Breast epithelium (tissue), 4 donors: ENCODE measurements at regions of chr5 and their contacts with region 1.

Region 1: GRCh38 chr5:55742778-55743177 is 4.9 kb downstream of the DDX4 start:
- DNase-seq: no peak
- H3K4me3 ChIP-seq: no peak overlapping the region
- H3K27ac ChIP-seq: no peak overlapping the region
- H3K4me1 ChIP-seq: no peaks in the 10 kb centered on the region
- H3K27me3 ChIP-seq: no peaks in the 10 kb centered on the region
- CTCF ChIP-seq: no peak
- POLR2A ChIP-seq: no peak

Region 2: GRCh38 chr5:55037046-55037771 is 705.6 kb before region 1 on chr5:
- intact Hi-C with region 1: no loop called
- DNase-seq: no peak
- H3K4me3 ChIP-seq: no peak overlapping the region
- H3K27ac ChIP-seq: no peak overlapping the region
- H3K4me1 ChIP-seq: no peaks in the 10 kb centered on the region
- H3K27me3 ChIP-seq: no peaks in the 10 kb centered on the region
- CTCF ChIP-seq: no peak
- POLR2A ChIP-seq: no peak

Region 3: GRCh38 chr5:55564721-55565120 is 178.1 kb before region 1 on chr5:
- intact Hi-C with region 1: no loop called
- DNase-seq: no peak
- H3K4me3 ChIP-seq: no peak overlapping the region
- H3K27ac ChIP-seq: no peak overlapping the region
- H3K4me1 ChIP-seq: no peaks in the 10 kb centered on the region
- H3K27me3 ChIP-seq: no peaks in the 10 kb centered on the region
- CTCF ChIP-seq: no peak
- POLR2A ChIP-seq: no peak

Region 4: DNA sequence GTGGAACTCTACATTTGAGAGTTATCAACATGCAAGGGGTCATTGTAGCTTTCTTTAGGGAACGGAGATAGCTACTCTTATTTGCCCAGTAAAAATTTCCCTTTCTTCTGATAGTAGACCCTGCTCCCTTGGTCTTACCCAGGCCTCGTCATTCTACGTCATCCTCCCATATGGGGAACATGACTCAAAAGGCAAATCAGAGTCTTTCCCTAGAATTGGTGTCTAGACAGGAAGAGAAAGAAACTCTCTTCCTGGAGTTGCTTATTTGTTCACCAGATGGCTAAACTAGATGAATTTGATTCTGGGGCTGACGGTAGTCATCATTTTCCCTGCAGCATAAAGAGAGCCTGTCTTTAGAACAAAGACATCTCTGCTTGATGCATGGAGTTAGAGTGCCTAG is 18.5 kb before region 1 on chr5:
- intact Hi-C with region 1: no loop called
- DNase-seq: no peak
- H3K4me3 ChIP-seq: no peak overlapping the region
- H3K27ac ChIP-seq: no peak overlapping the region
- H3K4me1 ChIP-seq: no peaks in the 10 kb centered on the region
- H3K27me3 ChIP-seq: no peaks in the 10 kb centered on the region
- CTCF ChIP-seq: no peak
- POLR2A ChIP-seq: no peak

Region 5: GRCh38 chr5:56543441-56544390 is 800.9 kb after region 1 on chr5:
- intact Hi-C with region 1: loop called (anchors 5 kb)
- DNase-seq: no peak
- H3K4me3 ChIP-seq: no peak overlapping the region
- H3K27ac ChIP-seq: no peak overlapping the region
- H3K4me1 ChIP-seq: no peaks in the 10 kb centered on the region
- H3K27me3 ChIP-seq: no peaks in the 10 kb centered on the region
- CTCF ChIP-seq: no peak
- POLR2A ChIP-seq: no peak